Heart left ventricle (tissue), 16 donors: ENCODE measurements at regions of chr1 and their contacts with region 1.

Region 1: DNA sequence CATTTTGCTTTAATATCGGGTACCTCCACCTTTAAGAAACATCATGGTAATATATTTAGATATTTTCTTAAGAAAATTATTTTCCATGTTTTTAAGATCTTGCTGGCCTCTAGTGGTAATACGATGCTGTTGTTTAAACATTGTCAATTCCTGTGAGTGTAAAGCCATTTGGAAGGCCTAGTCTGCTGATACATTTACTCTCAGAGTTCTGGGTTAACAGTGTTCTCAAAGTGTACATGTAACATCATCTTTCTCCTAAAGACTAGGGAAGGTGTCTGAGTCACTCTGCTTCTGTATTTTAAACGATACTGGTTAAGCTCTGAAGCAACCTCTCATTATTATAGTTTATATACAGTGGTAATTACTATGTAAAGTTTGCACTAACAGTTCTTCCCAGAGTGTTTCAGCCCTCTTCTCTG is 189.1 kb downstream of the RASAL2 start:
- DNase-seq: no peak
- ATAC-seq: peak in 1 of 4 donors; percentile 50
- H3K4me3 ChIP-seq: no peak overlapping the region
- H3K27ac ChIP-seq: no peak overlapping the region
- H3K4me1 ChIP-seq: peaks cover 0 to 54% (median 26%) of the 10 kb centered on the region in 12 donors
- H3K27me3 ChIP-seq: no peaks in the 10 kb centered on the region
- CTCF ChIP-seq: peak in 11 of 12 donors; percentile 23 to 65 (median 50)
- POLR2A ChIP-seq: no peak

Region 2: DNA sequence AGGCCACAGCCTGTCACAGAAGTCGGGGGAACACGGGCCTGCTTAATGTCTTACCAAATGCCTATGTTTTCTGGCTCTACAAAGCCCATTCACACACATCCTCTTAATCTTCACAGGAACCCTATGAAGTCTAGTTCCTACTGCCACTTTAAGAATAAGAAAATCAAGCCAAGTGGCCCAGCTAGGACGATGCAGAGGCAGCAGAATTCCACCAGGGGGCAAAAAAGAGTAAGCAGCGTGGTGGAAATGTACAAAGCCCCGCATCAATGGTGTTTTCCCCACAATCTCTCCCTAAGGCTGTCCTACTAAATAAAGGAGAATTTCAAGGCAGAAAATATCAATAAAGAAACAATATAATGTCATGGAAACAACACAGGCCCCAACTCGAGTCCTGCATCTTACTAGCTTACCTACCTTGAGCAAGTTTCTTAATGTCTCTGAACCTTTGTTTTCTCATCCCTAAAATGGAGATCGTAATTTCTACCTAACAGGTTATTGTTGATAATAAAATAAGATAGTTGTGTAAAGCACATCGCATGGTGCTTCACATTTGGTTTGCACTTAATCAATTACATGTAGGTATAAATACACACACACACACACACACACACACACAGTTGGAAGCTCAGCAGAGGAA is 334.5 kb before region 1 on chr1:
- intact Hi-C with region 1: loop called in 8 of 10 experiments (anchors 5 to 10 kb)
- DNase-seq: peak in 2 of 5 donors; percentile 40 to 45
- ATAC-seq: peak; percentile 24 to 67 (median 56)
- H3K4me3 ChIP-seq: no peak overlapping the region
- H3K27ac ChIP-seq: no peak overlapping the region
- H3K4me1 ChIP-seq: peaks cover 0 to 8% (median 0%) of the 10 kb centered on the region in 12 donors
- H3K27me3 ChIP-seq: no peaks in the 10 kb centered on the region
- CTCF ChIP-seq: peak; percentile 73 to 95 (median 86)
- POLR2A ChIP-seq: no peak

Region 3: DNA sequence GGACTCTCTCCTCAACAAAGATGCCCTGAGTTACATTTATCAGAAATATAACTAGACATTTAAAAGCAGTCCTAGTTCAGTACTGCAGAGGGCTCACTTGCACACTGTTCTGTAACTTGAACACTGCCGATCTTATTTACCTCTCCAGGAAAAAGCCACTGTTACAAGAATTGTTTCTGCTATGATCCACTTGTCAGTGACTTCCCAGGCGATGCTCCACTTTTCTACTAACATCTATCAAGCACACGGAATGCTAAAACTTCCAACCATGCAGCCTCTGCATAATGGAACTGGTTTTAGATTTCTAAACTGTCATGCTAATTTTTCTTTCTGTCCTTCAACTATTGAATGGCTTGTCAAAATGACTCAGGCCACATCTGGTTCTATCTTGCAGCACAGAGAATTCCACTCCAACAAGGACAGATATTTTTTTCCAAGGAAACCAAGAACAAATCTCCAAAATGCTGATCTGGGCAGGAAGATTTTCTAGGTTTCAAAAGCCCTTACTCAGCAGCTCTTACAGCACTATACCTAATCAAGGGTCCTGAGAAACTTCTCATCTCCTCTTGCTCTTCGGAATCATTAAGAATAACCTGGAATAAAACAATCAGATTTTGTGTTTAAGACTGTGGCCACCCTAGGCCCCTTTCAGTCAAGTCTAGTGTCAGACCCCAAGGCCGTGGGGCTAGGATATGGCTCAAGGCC is 323.0 kb before region 1 on chr1:
- intact Hi-C with region 1: loop called in 3 of 10 experiments (anchors 5 to 10 kb)
- DNase-seq: no peak
- ATAC-seq: peak; percentile 50 to 80 (median 70)
- H3K4me3 ChIP-seq: no peak overlapping the region
- H3K27ac ChIP-seq: no peak overlapping the region
- H3K4me1 ChIP-seq: no peaks in the 10 kb centered on the region
- H3K27me3 ChIP-seq: no peaks in the 10 kb centered on the region
- CTCF ChIP-seq: peak in 10 of 12 donors; percentile 16 to 52 (median 32)
- POLR2A ChIP-seq: no peak

Region 4: DNA sequence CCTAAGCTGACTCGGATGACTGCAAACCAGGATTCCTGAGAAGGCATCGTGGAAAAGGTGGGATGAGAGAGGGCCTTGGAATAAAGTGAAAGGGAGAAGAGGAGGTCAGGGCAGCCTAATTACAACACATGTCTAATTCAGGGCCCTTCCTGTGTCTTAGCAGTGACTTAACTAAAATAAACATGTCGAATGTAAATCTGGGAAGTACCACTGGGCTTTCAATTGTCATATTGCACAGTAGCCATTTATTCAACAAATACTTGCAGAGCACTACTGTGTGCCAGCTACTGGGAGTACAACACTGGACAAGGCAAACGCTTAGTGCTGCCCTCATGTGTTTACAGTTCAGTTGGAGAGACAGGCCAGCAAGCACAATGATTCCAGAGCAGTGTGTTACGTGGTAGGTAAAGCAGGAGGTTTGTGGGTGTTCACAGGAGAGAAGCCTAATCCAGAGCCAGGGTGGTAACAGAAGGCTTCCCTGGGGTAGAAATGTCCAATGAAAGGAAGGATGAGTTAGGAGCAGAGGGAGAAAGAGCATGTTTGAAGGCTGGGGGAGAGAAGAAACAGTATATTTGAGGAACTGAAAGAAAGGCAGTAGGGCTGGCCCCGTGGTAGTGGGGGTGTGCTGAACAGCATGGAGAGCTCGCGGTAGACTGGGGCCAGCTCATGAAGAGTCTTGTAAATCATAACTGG is 227.0 kb before region 1 on chr1:
- intact Hi-C with region 1: loop called in 1 of 10 experiments (anchors 5 kb)
- DNase-seq: peak in 2 of 5 donors; percentile 42 to 61
- ATAC-seq: peak; percentile 38 to 65 (median 62)
- H3K4me3 ChIP-seq: no peak overlapping the region
- H3K27ac ChIP-seq: peak overlapping the region; percentile 77 to 96 (median 84)
- H3K4me1 ChIP-seq: peaks cover 19 to 88% (median 64%) of the 10 kb centered on the region in 12 donors
- H3K27me3 ChIP-seq: no peaks in the 10 kb centered on the region
- CTCF ChIP-seq: peak in 10 of 12 donors; percentile 5 to 52 (median 25)
- POLR2A ChIP-seq: no peak